ENCODE measurements at regions of chr4 and their contacts with region 1.

Region 1: DNA sequence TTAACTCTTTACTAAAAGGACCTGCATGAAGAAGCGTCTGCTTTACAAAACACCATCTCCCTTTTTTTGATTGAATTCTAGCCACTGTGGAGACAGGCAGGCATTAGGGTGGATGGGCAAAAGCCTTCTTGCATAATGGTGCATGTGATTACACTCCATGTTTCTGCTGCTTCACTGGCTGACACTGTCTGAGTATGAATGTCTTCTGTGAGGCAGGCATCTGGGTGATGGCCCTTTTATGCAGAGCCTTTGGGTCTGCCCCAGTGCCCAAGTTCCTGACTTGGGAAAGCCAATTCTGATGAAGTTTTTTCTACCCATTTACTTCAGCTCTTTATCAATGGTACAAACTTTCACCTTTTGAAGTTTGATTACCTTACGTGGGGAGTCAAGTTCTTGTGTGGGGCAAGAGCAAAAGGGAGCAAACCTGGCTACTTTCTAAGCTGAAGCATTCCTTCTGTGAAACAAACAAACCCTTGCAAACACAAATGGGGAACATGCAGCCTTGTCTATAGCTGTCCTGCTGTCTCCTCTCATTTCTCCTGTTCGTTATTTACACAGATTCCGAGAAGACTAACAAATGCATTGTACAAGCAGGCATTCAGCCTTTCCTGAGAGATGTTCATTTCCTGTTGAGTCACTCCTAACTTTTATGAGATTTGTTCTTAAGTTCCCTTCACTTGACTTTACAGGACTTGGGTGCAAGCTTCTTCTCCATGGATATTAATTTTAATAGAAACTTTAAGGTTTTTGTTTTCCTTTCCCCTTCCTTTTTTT is 301.9 kb downstream of the TLL1 start:
- DNase-seq: peak; percentile 72
- H3K4me3 ChIP-seq: no peak overlapping the region
- H3K27ac ChIP-seq: peak overlapping the region; percentile 8
- H3K4me1 ChIP-seq: no peaks in the 10 kb centered on the region
- H3K27me3 ChIP-seq: no peaks in the 10 kb centered on the region
- CTCF ChIP-seq: no peak

Region 2: DNA sequence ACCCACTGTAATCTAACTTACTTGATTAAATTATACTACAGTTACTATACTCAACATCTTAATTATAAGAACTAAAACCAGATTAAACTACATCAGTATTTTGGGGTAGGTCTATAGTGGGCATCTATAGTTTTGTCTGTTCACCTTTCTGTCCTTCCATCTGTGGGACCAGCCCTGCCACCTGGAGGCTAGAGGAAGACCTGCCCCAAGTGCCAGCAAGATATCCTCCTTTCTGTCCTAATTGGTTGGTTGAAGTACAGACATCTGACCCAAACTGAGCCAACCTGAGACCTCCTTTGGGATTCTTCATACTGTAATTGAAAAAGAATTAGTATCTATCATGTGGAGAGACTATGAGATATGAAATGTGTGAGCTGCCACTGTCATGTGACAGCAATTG is 474.0 kb before region 1 on chr4:
- CTCF ChIA-PET with region 1: no interaction called
- POLR2A ChIA-PET with region 1: no interaction called
- intact Hi-C with region 1: no loop called
- DNase-seq: no peak
- H3K4me3 ChIP-seq: no peak overlapping the region
- H3K27ac ChIP-seq: no peak overlapping the region
- H3K4me1 ChIP-seq: peaks cover 6% of the 10 kb centered on the region
- H3K27me3 ChIP-seq: no peaks in the 10 kb centered on the region
- CTCF ChIP-seq: peak; percentile 45; the same call in 1 of the 2 replicates

Region 3: GRCh38 chr4:166501941-166502382 is 327.1 kb after region 1 on chr4:
- CTCF ChIA-PET with region 1: no interaction called
- POLR2A ChIA-PET with region 1: no interaction called
- intact Hi-C with region 1: loop called (anchors 10 kb)
- DNase-seq: peak; percentile 52
- H3K4me3 ChIP-seq: no peak overlapping the region
- H3K27ac ChIP-seq: no peak overlapping the region
- H3K4me1 ChIP-seq: no peaks in the 10 kb centered on the region
- H3K27me3 ChIP-seq: no peaks in the 10 kb centered on the region
- CTCF ChIP-seq: peak; percentile 79

Region 4: DNA sequence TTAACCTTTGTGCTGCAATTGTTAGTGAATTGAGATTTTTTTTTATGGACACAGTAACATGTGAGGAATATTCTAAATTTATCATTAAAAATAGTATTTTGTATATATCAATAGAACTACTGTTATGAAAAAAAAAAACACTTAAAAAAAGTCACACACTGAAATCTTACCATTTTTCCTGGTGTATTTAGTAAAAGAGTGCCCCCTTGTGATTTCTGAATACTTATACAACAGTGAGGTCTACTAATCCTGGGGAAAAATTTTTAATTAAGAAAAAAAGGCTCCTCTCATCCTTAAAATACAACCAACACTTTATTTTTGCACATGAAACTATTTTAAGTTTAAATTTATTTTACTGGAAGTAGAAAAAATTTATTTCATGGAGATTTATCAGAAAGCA is 1115.8 kb after region 1 on chr4:
- CTCF ChIA-PET with region 1: no interaction called
- POLR2A ChIA-PET with region 1: no interaction called
- intact Hi-C with region 1: loop called (anchors 10 kb)
- DNase-seq: peak; percentile 15
- H3K4me3 ChIP-seq: no peak overlapping the region
- H3K27ac ChIP-seq: no peak overlapping the region
- H3K4me1 ChIP-seq: no peaks in the 10 kb centered on the region
- H3K27me3 ChIP-seq: no peaks in the 10 kb centered on the region
- CTCF ChIP-seq: peak; percentile 49; the same call in 1 of the 2 replicates

Measured in A673 (cell line).